ENCODE measurements at regions of chr1 and their contacts with region 1.

Region 1: GRCh38 chr1:67264899-67265298 is 42.8 kb upstream of the IL12RB2 start:
- DNase-seq: no peak
- ATAC-seq: peak; percentile 30
- H3K4me3 Mint-ChIP-seq: no peak overlapping the region
- H3K27ac Mint-ChIP-seq: no peak overlapping the region
- H3K4me1 Mint-ChIP-seq: peaks cover 26% of the 10 kb centered on the region
- H3K27me3 Mint-ChIP-seq: peaks cover 2% of the 10 kb centered on the region

Region 2: GRCh38 chr1:67250051-67250653 is 14.7 kb before region 1 on chr1:
- CTCF ChIA-PET with region 1: no interaction called
- POLR2A ChIA-PET with region 1: no interaction called
- intact Hi-C with region 1: loop called in 1 of 2 experiments (anchors 2 kb)
- DNase-seq: no peak
- ATAC-seq: no peak
- H3K4me3 Mint-ChIP-seq: no peak overlapping the region
- H3K27ac Mint-ChIP-seq: no peak overlapping the region
- H3K4me1 Mint-ChIP-seq: no peaks in the 10 kb centered on the region
- H3K27me3 Mint-ChIP-seq: peaks cover 10% of the 10 kb centered on the region

Region 3: GRCh38 chr1:67307251-67308060 is 42.6 kb after region 1 on chr1 and contains the start of gene IL12RB2:
- CTCF ChIA-PET with region 1: no interaction called
- POLR2A ChIA-PET with region 1: no interaction called
- intact Hi-C with region 1: no loop called
- DNase-seq: peak; percentile 77
- ATAC-seq: peak; percentile 77
- H3K4me3 Mint-ChIP-seq: peak within 1 kb of the TSS; percentile 83
- H3K27ac Mint-ChIP-seq: peak within 1 kb of the TSS; percentile 90
- H3K4me1 Mint-ChIP-seq: peaks cover 48% of the 10 kb centered on the region
- H3K27me3 Mint-ChIP-seq: no peaks in the 10 kb centered on the region
- total RNA-seq, gene IL12RB2: 77.9 to 99.2 TPM

Measured in activated CD4-positive, alpha-beta T cell treated with anti-CD3 and anti-CD28 coated beads for 36 hours (primary cell).